ENCODE measurements at regions of chr1 and their contacts with region 1.

Region 1: DNA sequence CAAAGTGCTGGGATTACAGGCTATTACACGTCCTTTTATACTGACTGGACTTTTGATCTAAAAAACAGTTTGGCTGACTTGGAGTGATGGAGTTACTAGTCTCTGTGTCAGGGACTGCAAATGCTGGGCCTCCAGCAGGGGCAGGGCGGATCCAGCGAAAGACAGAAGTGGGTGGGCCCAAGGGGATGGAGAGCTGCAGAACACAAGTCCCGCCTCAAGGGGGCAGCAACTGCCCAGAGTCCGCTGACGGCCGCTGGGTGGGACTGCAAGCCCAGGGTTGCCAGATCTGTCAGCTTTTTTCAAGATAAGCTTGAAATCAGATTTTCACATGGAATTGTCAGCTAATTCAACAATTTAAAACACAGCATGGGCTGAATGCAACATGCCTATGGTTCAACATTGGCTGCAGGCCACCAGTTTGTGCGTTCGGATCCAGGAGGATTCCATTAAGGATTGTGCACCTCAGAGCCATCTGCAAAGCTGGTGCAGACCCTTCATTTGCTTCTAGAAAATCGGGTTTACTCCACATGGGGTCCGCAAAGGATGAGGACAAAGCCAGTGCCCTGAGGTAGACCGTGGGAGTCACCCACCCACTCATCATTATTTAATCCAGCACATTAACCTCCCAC is 10.7 kb downstream of the STMN1 start:
- DNase-seq: peak; percentile 93
- ATAC-seq: peak; percentile 98
- H3K4me3 Mint-ChIP-seq: no peak overlapping the region
- H3K27ac Mint-ChIP-seq: peak overlapping the region; percentile 6
- H3K4me1 Mint-ChIP-seq: peaks cover 27% of the 10 kb centered on the region
- H3K27me3 Mint-ChIP-seq: no peaks in the 10 kb centered on the region

Region 2: DNA sequence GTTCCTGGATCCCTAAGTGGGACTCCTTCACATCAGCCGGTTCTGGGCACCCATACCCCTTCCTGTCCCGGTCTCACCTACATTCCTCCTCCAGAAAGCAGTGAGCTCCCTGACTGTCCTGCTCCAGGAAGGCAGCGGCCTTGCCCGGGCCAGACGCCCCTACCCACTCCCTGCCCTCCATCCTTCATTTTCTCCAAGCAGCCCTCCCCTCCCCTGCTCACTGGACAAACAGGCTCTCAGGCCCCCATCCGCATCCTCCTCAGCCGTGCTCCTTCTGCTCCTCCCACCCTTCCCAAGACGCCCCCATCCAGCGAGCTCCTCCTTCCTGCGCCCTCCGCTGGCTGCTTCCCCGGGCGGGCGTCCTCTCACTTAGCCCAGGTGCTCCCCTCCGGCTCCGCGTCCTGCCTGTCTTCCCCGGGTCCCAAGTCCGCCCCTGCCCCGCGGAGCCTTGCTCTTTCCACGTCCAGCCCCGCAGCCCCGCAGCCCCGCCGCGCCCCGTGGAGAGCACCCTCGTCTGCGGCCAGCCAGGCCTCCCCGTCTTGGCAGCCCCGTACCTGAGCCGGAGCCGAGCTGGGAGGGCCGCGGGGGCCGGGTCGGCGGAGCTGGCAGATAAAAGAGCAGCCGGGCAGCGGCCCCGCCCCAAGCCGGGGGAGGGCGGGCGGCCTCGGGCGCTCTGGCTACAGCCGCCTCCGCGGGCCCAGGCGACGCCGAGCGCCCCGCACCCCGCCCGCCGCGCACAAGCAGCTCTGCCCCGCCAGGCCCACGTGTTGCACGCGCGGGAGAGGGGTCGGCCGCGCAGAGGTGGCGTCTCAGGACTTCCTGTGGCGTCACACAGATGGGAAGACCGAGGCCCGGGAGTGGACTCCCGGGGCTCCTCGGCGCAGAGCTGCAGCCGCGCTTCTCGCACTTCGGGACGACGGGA is 20.3 kb before region 1 on chr1 and contains the start of gene PAQR7:
- CTCF ChIA-PET with region 1: interaction called, 13 read pairs
- DNase-seq: peak; percentile 72
- ATAC-seq: peak; percentile 86
- H3K4me3 Mint-ChIP-seq: peak within 1 kb of the TSS; percentile 79
- H3K27ac Mint-ChIP-seq: peak within 1 kb of the TSS; percentile 15
- H3K4me1 Mint-ChIP-seq: peaks cover 10% of the 10 kb centered on the region
- H3K27me3 Mint-ChIP-seq: peaks cover 20% of the 10 kb centered on the region
- total RNA-seq, gene PAQR7: 2.2 to 5.0 TPM

Region 3: DNA sequence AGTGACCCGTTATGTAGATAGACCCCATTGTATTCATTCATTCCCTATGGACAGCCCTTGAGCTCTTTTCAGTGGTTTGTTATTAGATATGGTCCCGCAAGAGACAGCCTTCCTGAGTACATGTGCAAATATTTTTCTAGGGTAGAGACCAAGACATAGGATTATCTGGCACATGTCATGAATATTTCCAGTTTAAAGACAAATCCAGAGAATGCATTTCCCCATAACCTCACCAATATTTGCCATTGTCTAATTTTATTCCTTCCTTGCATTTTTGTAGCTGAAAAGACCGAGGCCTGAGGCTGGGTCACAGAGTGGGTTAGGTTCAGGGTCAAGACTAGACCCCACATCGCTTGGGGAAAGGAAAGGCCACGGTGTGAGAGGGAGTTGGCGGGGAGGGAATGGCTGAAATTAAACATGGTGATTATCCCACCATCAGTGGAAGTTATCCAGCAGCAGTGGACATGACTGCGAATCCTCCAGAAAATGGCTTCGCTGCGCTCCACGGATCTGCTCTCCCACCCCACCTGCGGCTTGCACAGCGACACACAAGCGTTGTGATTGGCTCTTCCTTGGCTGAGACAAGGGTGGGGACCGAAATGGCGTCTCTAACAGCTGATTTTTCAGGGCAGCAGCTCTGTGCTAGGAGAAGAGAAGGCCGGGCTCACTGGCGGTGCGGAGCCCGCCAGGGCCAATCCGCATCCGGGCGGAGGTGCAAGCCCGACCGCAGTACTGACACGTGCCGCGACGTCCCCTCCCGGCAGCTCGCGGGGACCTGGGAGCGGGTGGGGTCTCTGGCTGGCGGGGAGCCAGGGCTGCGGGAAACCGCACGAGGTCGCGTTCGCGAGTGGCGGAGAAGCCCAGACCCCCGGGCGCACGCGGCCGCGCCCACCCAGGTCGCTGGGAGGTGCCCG is 26.8 kb after region 1 on chr1:
- CTCF ChIA-PET with region 1: interaction called, 21 read pairs
- DNase-seq: peak; percentile 69
- ATAC-seq: peak; percentile 91
- H3K4me3 Mint-ChIP-seq: peak overlapping the region; percentile 74
- H3K27ac Mint-ChIP-seq: peak overlapping the region; percentile 29
- H3K4me1 Mint-ChIP-seq: peaks cover 25% of the 10 kb centered on the region
- H3K27me3 Mint-ChIP-seq: peaks cover 40% of the 10 kb centered on the region

Region 4: DNA sequence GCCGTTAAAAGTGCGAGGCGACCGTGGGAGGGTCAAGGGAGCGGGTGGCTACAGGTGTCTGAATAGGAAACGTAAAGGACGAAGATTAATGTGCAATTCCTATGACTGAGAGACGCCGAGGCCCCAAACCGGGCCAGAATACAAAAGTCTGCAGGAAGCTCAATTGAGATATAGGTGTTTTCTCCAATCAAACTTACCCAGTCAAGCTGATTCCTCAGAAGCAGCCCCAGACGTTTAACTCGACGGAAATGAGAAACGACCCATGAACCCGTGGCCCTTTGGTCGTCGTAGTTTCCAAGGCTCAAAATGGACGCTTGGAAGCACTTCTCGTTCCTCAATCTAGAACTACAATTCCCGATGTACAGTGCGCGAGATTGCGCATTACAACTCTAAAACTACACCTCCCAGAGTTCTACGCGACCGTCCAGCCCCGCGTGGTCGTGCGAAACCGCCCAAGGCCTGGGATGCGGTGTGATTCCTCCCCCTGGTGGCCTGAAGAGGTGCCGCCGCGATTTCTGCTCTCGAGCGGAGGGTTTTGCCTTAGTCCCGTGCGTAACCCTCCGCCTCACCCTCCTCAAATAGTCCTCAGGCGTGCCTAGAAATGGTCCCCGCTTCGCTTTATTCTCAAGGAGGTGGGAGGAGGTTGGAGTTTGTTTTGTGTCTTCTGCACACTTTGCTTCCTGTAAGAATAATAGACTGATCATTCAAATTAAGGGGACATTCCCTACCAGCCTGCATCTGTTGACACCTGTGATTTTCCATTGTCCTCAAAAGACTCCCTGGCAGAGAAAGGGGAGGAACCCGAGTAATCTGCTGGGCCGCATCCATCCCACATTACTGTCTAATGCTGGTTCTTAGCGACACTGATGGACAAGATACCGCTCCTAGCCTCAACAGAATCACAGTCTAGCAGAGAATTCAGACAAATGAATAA is 102.6 kb after region 1 on chr1 and contains the start of gene PAFAH2:
- CTCF ChIA-PET with region 1: interaction called, 309 read pairs
- DNase-seq: peak; percentile 99
- ATAC-seq: peak; percentile 97
- H3K4me3 Mint-ChIP-seq: peak within 1 kb of the TSS; percentile 95
- H3K27ac Mint-ChIP-seq: peak within 1 kb of the TSS; percentile 98
- H3K4me1 Mint-ChIP-seq: peaks cover 24% of the 10 kb centered on the region
- H3K27me3 Mint-ChIP-seq: peaks cover 4% of the 10 kb centered on the region
- total RNA-seq, gene PAFAH2: 9.0 to 9.2 TPM

Region 5: DNA sequence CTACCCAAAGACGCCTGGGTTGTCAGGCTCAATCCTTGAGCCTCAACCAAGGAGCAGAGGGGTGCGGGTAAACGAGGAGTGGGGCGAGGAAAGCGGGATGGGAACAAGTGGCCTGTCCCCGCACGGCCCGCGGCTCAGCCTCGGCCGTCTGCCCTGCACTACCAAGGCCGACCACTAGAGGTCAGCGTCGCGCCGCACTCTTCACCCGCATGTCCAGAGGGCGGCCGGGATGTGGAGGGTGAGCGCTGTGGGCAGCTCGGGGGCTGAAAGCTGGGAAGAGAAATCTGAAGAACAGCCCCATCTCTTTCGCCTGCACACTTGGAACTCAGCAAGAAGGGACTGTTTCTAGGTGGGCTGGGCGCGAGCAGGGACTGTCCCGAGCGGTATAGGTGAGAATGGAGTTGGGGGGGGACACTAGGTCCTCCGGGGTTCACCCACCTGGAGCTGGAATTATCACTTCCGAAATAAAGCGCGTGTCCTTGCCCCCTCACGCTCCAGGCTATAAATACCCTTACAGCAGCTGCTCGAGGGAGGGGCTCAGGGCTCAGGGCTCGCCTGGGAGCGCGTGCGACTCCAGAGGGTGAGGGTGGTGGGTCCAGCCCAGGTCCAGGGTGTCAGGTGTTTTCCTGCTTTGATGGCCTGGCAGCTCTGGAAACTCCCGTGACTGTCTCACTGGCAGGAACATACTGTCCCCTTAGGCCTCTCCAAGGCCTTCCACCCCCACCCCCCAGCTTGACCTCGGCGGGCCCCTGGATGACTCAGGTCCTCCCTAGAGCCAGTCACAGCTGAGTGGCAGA is 140.7 kb after region 1 on chr1:
- CTCF ChIA-PET with region 1: interaction called, 14 read pairs
- DNase-seq: peak; percentile 79
- ATAC-seq: peak; percentile 70
- H3K4me3 Mint-ChIP-seq: peak overlapping the region; percentile 89
- H3K27ac Mint-ChIP-seq: no peak overlapping the region
- H3K4me1 Mint-ChIP-seq: peaks cover 8% of the 10 kb centered on the region
- H3K27me3 Mint-ChIP-seq: peaks cover 15% of the 10 kb centered on the region

Region 6: GRCh38 chr1:26181586-26182382 is 286.3 kb after region 1 on chr1:
- CTCF ChIA-PET with region 1: no interaction called
- DNase-seq: no peak
- ATAC-seq: no peak
- H3K4me3 Mint-ChIP-seq: no peak overlapping the region
- H3K27ac Mint-ChIP-seq: no peak overlapping the region
- H3K4me1 Mint-ChIP-seq: no peaks in the 10 kb centered on the region
- H3K27me3 Mint-ChIP-seq: peaks cover under 1% of the 10 kb centered on the region